ENCODE measurements at regions of chr2 and their contacts with region 1.

Region 1: GRCh38 chr2:55050133-55050994 is at the start of gene RTN4:
- DNase-seq: peak; percentile 98
- ATAC-seq: peak; percentile 86
- H3K4me3 Mint-ChIP-seq: peak within 1 kb of the TSS; percentile 96
- H3K27ac Mint-ChIP-seq: peak within 1 kb of the TSS; percentile 99
- H3K4me1 Mint-ChIP-seq: peaks cover 70% of the 10 kb centered on the region
- H3K27me3 Mint-ChIP-seq: no peaks in the 10 kb centered on the region
- CTCF ChIP-seq: no peak
- total RNA-seq, gene RTN4: 60.5 and 60.6 TPM in 2 replicates

Region 2: GRCh38 chr2:54115284-54116137 is 934.9 kb before region 1 on chr2 and contains the start of gene ACYP2:
- CTCF ChIA-PET with region 1: no interaction called
- POLR2A ChIA-PET with region 1: interaction called, 3 read pairs
- intact Hi-C with region 1: loop called (anchors 1 kb)
- DNase-seq: peak; percentile 89
- ATAC-seq: peak; percentile 84
- H3K4me3 Mint-ChIP-seq: peak within 1 kb of the TSS; percentile 97
- H3K27ac Mint-ChIP-seq: peak within 1 kb of the TSS; percentile 100
- H3K4me1 Mint-ChIP-seq: peaks cover 26% of the 10 kb centered on the region
- H3K27me3 Mint-ChIP-seq: no peaks in the 10 kb centered on the region
- CTCF ChIP-seq: no peak
- total RNA-seq, gene ACYP2: 14.9 and 15.9 TPM in 2 replicates

Region 3: GRCh38 chr2:54755641-54756326 is 294.6 kb before region 1 on chr2:
- CTCF ChIA-PET with region 1: no interaction called
- POLR2A ChIA-PET with region 1: interaction called, 6 read pairs
- intact Hi-C with region 1: loop called (anchors 10 kb)
- DNase-seq: no peak
- ATAC-seq: peak; percentile 67
- H3K4me3 Mint-ChIP-seq: peak overlapping the region; percentile 74
- H3K27ac Mint-ChIP-seq: peak overlapping the region; percentile 92
- H3K4me1 Mint-ChIP-seq: peaks cover 50% of the 10 kb centered on the region
- H3K27me3 Mint-ChIP-seq: no peaks in the 10 kb centered on the region
- CTCF ChIP-seq: no peak

Region 4: DNA sequence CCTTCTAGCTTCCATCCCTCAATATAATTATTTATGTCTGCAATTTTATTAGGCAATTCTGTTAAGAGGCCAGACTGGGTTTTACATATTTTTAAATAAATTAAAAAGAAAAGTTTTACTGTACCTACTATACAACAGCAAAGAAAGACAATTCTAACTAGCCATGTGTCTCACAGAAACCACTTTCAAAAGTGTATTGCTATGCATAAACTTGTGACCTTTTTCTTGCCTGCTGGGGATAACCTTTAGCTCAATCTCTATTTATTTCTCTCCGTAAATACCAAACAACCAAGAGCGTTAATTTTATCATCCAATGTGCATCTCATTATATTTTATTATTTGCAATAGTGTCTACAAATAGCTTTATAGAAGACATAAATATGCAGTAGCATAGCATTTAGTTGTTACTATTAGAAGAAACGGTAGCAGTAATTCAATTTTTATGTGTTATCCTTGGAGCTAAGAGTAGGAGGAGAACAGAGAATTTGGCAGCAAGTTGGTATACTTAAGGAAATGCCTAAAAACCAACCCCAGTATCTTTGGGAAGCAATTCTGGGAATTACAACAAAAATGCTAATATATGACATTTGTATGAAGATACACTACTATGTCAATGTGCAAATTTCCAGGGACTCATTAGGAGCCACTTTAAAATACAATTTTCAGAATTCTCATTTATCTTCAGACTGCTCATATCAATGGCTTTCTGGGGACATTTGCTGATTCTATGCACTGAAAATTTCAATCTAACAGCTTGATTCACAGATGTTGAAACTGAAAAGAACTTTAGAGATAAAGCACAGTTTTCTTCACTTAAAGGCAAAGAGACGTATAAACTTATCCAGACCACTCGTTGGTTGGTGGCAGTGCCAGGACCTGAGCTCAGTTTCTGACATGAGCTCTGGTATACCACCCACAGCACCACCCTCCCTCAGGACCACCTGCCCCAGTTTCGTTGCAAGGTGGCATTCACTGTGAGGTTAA is 22.9 kb after region 1 on chr2:
- CTCF ChIA-PET with region 1: no interaction called
- POLR2A ChIA-PET with region 1: no interaction called
- intact Hi-C with region 1: no loop called
- DNase-seq: no peak
- ATAC-seq: no peak
- H3K4me3 Mint-ChIP-seq: no peak overlapping the region
- H3K27ac Mint-ChIP-seq: no peak overlapping the region
- H3K4me1 Mint-ChIP-seq: no peaks in the 10 kb centered on the region
- H3K27me3 Mint-ChIP-seq: peaks cover 3% of the 10 kb centered on the region
- CTCF ChIP-seq: no peak

Region 5: GRCh38 chr2:55119711-55120487 is 69.5 kb after region 1 on chr2:
- CTCF ChIA-PET with region 1: no interaction called
- POLR2A ChIA-PET with region 1: no interaction called
- intact Hi-C with region 1: no loop called
- DNase-seq: no peak
- ATAC-seq: no peak
- H3K4me3 Mint-ChIP-seq: no peak overlapping the region
- H3K27ac Mint-ChIP-seq: no peak overlapping the region
- H3K4me1 Mint-ChIP-seq: peaks cover 13% of the 10 kb centered on the region
- H3K27me3 Mint-ChIP-seq: peaks cover 7% of the 10 kb centered on the region
- CTCF ChIP-seq: no peak

Region 6: DNA sequence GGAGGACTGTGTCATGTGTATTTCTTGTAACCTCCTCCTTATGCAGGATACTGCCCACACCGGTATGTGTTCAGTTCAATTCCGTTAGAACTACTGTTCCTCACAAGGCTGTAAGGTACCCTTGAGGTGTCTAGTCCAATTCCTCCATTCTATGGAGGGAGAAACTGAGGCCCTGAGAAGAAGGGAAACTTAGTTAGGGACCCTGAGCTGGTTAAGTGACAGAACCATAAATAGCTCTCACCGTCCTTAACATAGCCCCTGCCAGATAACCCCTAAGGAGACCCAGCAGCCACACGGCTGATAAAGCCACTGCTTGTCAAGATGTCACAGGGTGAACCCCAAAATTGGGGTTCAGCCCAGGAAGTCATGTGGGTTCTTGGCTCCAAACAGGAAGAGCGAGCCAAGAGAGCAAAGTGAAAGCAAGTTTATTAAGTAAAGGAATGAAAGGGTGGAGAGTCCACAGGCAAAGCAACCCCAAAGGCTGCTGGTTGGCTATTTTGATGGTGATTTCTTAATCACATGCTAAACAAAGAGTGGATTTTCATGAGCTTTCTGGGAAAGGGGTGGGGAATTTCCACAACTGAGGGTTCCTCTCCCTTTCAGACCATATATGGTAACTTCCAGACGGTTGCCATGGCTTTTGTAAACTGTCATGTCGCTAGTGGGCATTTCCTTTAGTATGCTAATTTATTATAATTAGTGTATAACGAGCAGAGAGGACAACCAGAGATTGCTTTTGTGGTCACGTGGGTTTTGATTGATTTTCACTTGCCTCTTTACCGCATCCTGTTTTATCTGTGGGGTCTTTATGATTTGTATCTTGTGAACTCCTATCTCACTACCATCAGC is 83.3 kb after region 1 on chr2:
- CTCF ChIA-PET with region 1: no interaction called
- POLR2A ChIA-PET with region 1: interaction called, 13 read pairs
- intact Hi-C with region 1: loop called (anchors 1 kb)
- DNase-seq: no peak
- ATAC-seq: peak; percentile 76
- H3K4me3 Mint-ChIP-seq: peak overlapping the region; percentile 88
- H3K27ac Mint-ChIP-seq: peak overlapping the region; percentile 91
- H3K4me1 Mint-ChIP-seq: peaks cover 34% of the 10 kb centered on the region
- H3K27me3 Mint-ChIP-seq: no peaks in the 10 kb centered on the region
- CTCF ChIP-seq: no peak

Region 7: GRCh38 chr2:55196506-55196905 is 146.1 kb after region 1 on chr2:
- CTCF ChIA-PET with region 1: no interaction called
- POLR2A ChIA-PET with region 1: no interaction called
- intact Hi-C with region 1: no loop called
- DNase-seq: no peak
- ATAC-seq: no peak
- H3K4me3 Mint-ChIP-seq: no peak overlapping the region
- H3K27ac Mint-ChIP-seq: no peak overlapping the region
- H3K4me1 Mint-ChIP-seq: no peaks in the 10 kb centered on the region
- H3K27me3 Mint-ChIP-seq: no peaks in the 10 kb centered on the region
- CTCF ChIP-seq: no peak

Region 8: GRCh38 chr2:55232084-55232862 is 181.9 kb after region 1 on chr2 and contains the starts of genes CLHC1 and RPS27A:
- CTCF ChIA-PET with region 1: no interaction called
- POLR2A ChIA-PET with region 1: interaction called, 21 read pairs
- intact Hi-C with region 1: loop called (anchors 1 kb)
- DNase-seq: peak; percentile 92
- ATAC-seq: peak; percentile 86
- H3K4me3 Mint-ChIP-seq: peak within 1 kb of the TSS; percentile 99
- H3K27ac Mint-ChIP-seq: peak within 1 kb of the TSS; percentile 98
- H3K4me1 Mint-ChIP-seq: peaks cover 58% of the 10 kb centered on the region
- H3K27me3 Mint-ChIP-seq: no peaks in the 10 kb centered on the region
- CTCF ChIP-seq: no peak
- total RNA-seq, gene CLHC1: 7.1 and 10.5 TPM in 2 replicates
- total RNA-seq, gene RPS27A: 1,833 and 2,316 TPM in 2 replicates

Region 9: DNA sequence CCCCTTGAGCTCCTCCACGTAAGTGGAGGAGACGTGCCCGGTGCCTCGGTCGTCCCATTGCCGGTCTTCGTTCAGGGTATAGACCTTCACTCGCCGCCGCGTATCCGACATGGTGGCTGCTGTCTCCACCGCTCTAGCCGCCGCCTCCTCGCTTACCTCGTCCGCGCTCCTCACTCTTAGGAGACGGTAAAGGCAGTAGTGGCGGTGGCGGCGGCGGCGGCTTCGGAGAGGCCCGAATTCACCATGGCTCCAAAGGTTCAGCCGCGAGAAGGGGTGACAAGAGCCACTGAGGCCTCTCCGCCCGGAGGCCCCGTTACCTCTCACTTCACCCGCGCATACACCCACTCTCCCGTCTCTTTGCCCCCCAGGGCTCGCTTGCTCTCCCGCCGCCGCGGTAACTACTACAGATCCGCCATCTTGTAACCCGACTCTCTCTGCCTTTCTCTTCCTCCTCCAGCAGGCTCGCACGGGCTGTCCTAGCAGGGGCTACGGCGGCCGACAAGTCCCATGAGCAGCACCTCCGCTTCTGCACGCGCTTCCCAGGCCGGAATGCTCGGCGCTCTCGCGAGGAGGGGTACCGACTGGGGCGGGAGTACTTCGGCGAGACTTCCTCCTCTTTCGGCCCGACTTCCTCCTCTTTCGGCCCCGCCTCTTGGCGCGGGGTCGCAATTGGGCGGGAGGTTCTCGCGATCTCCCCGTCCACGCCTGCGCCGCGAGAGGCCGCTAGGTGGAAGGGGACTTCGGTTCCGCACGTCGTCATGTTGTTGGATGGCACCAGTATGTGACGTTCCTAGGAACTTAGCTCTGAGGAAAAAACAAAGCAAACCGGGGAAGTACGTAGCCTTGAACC is 567.0 kb after region 1 on chr2 and contains the start of gene PPP4R3B:
- CTCF ChIA-PET with region 1: no interaction called
- POLR2A ChIA-PET with region 1: interaction called, 3 read pairs
- intact Hi-C with region 1: loop called (anchors 2 kb)
- DNase-seq: peak; percentile 96
- ATAC-seq: peak; percentile 81
- H3K4me3 Mint-ChIP-seq: no peak within 1 kb of the TSS
- H3K27ac Mint-ChIP-seq: no peak within 1 kb of the TSS
- H3K4me1 Mint-ChIP-seq: peaks cover 22% of the 10 kb centered on the region
- H3K27me3 Mint-ChIP-seq: no peaks in the 10 kb centered on the region
- CTCF ChIP-seq: no peak
- total RNA-seq, gene PPP4R3B: 75.6 and 82.4 TPM in 2 replicates

Measured in activated B cell treated with CpG ODN at 0.5 μM for 24 hours (primary cell).